ENCODE measurements at regions of chr14 and their contacts with region 1.

Region 1: DNA sequence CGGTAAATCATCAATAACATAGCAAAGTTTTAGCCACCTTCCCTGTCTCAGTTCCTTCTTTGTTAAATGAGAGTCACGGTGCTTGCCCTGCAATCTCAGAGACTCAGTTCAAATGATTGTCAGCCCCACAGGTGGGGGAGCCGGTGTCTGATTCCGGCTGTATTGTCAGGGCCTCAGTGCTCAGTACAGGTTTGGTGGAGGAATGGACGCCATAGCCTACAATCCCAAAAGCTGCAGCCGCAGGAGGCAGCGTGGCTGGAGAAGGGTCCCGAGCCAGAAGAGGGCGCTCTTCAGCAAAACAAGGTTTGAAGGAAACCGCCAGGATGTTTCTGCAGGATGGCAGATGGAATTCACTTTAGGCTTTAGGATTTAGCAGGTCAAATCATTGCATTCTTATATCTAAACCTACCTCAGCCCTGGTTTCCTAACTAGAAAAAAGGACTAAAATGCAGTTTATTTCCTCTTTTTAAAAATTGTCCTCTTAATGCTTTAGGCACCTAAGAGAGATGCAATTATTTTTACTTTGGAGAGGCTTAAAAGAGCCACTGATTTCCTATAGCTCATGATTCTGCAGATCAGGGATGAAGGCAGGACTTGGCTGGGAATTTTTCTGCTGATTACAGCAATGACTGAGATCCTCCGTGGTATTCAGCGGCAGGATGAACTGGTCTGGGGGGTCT is 29.2 kb downstream of the FOS start:
- DNase-seq: peak; percentile 43 to 73 (median 60)
- H3K4me3 ChIP-seq: no peak overlapping the region
- H3K4me3 Mint-ChIP-seq: no peak overlapping the region
- H3K27ac ChIP-seq: no peak overlapping the region
- H3K27ac Mint-ChIP-seq: no peak overlapping the region
- H3K4me1 ChIP-seq: peaks cover 6% of the 10 kb centered on the region
- H3K4me1 Mint-ChIP-seq: peaks cover 5 to 11% (median 8%) of the 10 kb centered on the region in 3 donors
- H3K27me3 ChIP-seq: no peaks in the 10 kb centered on the region
- H3K27me3 Mint-ChIP-seq: peaks cover 3 to 4% of the 10 kb centered on the region in 2 donors

Region 2: DNA sequence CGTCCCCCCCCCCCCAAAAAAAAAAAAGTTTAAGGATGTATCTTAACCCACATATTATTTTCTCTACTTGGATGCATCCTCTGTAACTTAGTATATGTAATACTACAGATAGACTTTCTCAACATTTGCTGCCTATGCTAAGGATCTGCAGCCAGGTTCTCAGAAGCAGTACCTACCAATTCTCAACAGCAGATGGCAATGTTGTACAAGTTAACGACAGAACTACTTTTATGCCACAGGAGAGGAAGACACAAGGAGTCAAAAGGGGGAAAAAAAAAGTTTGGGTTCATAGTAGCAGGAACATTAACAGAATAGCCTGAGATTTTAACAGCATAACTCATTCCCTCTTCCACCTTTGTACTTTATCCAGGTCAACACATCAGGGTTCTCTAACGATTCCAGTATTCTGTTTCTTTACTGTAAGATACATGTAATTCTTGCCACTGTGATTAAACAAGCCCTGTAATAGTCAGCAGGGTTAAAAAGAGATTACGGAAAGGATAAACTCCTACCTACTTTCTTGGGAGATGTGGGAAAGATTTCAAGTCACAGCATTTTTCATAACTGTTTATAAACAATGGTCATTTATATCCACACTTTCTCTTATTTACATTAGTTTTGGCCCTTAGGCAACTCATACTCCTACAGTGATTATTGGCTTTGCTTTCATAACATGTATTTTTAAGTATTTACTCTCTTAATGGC is 175.3 kb before region 1 on chr14:
- CTCF ChIA-PET with region 1: interaction called, 55 read pairs
- POLR2A ChIA-PET with region 1: no interaction called
- DNase-seq: peak in 4 of 5 donors; percentile 42 to 69 (median 66)
- H3K4me3 ChIP-seq: no peak overlapping the region
- H3K4me3 Mint-ChIP-seq: no peak overlapping the region
- H3K27ac ChIP-seq: no peak overlapping the region
- H3K27ac Mint-ChIP-seq: peak overlapping the region in 7 of 8 donors; percentile 8 to 82 (median 19)
- H3K4me1 ChIP-seq: peaks cover 6% of the 10 kb centered on the region
- H3K4me1 Mint-ChIP-seq: peaks cover 9 to 32% (median 23%) of the 10 kb centered on the region in 3 donors
- H3K27me3 ChIP-seq: no peaks in the 10 kb centered on the region
- H3K27me3 Mint-ChIP-seq: no peaks in the 10 kb centered on the region

Region 3: DNA sequence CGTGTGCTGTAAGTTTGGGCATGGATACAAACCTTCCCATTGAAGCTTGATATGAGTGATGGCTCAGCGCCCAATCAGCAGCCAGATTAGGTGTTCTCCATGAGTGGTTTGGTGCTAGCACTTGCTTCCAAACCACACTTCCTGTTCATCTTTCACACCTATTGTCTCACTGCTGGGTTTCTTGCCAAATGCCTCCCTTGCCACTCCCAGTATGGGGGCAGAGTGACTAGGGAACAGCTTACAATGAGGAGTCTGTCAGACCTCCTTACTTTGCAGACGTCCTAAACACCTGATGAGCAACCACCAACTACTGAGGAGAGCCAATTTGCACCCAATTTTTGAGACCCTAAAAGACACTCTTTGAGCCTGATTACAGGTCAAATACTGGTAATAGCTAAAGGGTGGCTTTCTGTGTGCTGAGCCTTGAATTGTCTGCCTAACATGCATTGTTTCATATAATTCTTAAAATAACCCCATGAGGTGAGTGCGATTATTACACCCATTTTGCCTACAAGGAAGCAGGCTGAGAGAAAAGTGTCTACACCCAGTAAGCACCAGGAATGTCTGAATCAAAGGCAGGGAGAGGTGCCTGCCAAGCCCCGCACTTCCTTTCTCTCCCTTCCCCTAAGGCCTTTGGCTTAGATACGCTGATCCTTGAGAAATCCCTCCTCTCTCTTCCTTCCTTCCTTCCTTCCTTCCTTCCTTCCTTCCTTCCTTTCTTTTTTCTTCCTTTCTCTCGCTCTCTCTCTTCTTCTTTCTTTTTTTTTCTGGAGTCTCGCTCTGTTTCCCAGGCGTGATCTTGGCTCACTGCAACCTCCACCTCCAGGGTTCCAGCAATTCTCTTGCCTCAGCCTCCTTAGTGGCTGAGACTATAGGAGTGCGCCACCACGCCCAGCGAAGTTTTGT is 77.4 kb before region 1 on chr14:
- CTCF ChIA-PET with region 1: interaction called, 11 read pairs
- POLR2A ChIA-PET with region 1: no interaction called
- DNase-seq: peak; percentile 44 to 82 (median 54)
- H3K4me3 ChIP-seq: peak overlapping the region; percentile 14
- H3K4me3 Mint-ChIP-seq: peak overlapping the region; percentile 2 to 76 (median 65)
- H3K27ac ChIP-seq: peak overlapping the region; percentile 45
- H3K27ac Mint-ChIP-seq: peak overlapping the region; percentile 66 to 98 (median 86)
- H3K4me1 ChIP-seq: peaks cover 58% of the 10 kb centered on the region
- H3K4me1 Mint-ChIP-seq: peaks cover 55 to 59% (median 58%) of the 10 kb centered on the region in 3 donors
- H3K27me3 ChIP-seq: no peaks in the 10 kb centered on the region
- H3K27me3 Mint-ChIP-seq: peaks cover 0 to 1% of the 10 kb centered on the region in 2 donors

Region 4: DNA sequence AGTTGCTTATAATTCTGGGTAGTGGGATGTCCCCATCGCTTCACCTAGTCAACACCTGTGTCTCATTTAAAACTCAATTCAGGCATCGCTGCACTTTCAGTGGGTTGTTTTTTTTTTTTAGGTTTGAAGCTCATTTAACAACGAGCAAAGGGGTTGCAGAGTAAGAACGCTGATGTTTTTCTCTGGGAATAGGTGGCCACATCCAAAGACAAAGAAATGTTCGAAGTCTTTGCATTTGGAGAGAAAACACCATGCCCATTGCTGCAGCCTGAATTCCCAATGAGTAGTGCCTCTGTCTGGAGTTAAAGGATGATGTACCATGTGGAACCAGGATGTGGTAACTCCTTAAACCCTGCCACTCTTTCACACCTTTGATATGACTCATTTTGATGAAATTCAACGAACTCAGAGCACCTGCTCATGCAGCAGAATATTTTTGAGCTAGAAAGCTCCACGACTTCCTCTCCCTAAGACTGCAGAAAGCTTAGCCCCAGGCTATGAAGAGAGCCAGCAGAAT is 179.4 kb after region 1 on chr14:
- CTCF ChIA-PET with region 1: interaction called, 52 read pairs
- POLR2A ChIA-PET with region 1: no interaction called
- DNase-seq: peak in 1 of 5 donors; percentile 22
- H3K4me3 ChIP-seq: no peak overlapping the region
- H3K4me3 Mint-ChIP-seq: peak overlapping the region in 6 of 7 donors; percentile 4 to 65 (median 20)
- H3K27ac ChIP-seq: no peak overlapping the region
- H3K27ac Mint-ChIP-seq: peak overlapping the region in 5 of 8 donors; percentile 24 to 70 (median 36)
- H3K4me1 ChIP-seq: peaks cover 7% of the 10 kb centered on the region
- H3K4me1 Mint-ChIP-seq: peaks cover 12 to 24% (median 22%) of the 10 kb centered on the region in 3 donors
- H3K27me3 ChIP-seq: no peaks in the 10 kb centered on the region
- H3K27me3 Mint-ChIP-seq: peaks cover 0 to 1% of the 10 kb centered on the region in 2 donors

Region 5: DNA sequence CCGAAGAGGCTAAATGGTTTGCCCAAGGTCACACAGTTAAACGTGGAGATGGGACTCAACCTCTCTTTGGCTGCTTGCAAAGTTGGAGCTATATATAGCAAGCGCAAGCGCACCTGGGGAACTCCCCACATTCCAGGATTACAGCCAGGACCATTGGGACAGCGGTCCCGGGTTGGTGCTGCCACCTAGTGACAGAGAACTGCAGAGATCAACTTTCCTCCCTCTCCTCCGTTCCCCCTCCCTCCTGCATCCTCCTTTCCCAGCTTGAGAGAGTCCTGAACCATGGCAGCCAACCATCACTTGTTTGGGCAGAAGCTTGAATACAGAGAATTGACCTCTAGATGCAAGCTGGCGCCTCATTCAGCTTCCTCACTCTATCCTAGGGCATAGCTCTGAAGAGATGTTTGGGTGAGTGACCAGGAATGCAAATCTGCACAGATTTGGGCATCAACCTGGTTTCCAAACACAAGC is 253.2 kb after region 1 on chr14:
- CTCF ChIA-PET with region 1: interaction called, 19 read pairs
- POLR2A ChIA-PET with region 1: no interaction called
- DNase-seq: peak; percentile 21 to 68 (median 33)
- H3K4me3 ChIP-seq: no peak overlapping the region
- H3K4me3 Mint-ChIP-seq: peak overlapping the region in 1 of 7 donors; percentile 33
- H3K27ac ChIP-seq: no peak overlapping the region
- H3K27ac Mint-ChIP-seq: peak overlapping the region in 4 of 8 donors; percentile 22 to 78 (median 46)
- H3K4me1 ChIP-seq: peaks cover 10% of the 10 kb centered on the region
- H3K4me1 Mint-ChIP-seq: peaks cover 14 to 33% (median 27%) of the 10 kb centered on the region in 3 donors
- H3K27me3 ChIP-seq: no peaks in the 10 kb centered on the region
- H3K27me3 Mint-ChIP-seq: peaks cover 0 to 1% of the 10 kb centered on the region in 2 donors

Region 6: GRCh38 chr14:75960231-75960630 is 652.4 kb after region 1 on chr14:
- CTCF ChIA-PET with region 1: no interaction called
- POLR2A ChIA-PET with region 1: no interaction called
- DNase-seq: no peak
- H3K4me3 ChIP-seq: no peak overlapping the region
- H3K4me3 Mint-ChIP-seq: no peak overlapping the region
- H3K27ac ChIP-seq: no peak overlapping the region
- H3K27ac Mint-ChIP-seq: no peak overlapping the region
- H3K4me1 ChIP-seq: no peaks in the 10 kb centered on the region
- H3K4me1 Mint-ChIP-seq: no peaks in the 10 kb centered on the region
- H3K27me3 ChIP-seq: no peaks in the 10 kb centered on the region
- H3K27me3 Mint-ChIP-seq: no peaks in the 10 kb centered on the region